GM18951 (cell line): ENCODE measurements at regions of chr1 and their contacts with region 1.

Region 1: DNA sequence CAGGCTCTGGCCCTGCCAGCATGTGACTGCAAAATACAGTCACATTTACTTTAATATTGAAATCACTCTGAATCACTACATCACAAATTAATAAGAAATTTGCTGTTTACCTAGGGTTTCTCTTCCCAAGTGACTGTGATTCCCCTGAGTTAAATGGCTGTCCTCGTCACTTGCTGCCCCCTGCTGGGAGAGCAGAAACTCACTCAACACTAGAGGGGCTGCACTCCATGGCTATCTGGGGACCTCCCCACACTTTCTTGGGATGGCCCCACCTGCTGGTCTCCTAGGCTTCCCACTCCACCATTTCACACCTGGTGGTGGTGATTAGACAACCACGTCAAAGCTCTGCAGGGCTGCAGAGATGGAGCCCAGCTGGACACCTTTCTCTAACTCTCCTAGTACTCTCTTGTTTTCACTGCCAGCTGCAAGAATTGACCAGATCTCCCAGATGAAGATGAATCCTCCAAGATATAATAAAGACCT is 63.4 kb downstream of the CD2 start:
- POLR2A ChIP-seq: no peak

Region 2: DNA sequence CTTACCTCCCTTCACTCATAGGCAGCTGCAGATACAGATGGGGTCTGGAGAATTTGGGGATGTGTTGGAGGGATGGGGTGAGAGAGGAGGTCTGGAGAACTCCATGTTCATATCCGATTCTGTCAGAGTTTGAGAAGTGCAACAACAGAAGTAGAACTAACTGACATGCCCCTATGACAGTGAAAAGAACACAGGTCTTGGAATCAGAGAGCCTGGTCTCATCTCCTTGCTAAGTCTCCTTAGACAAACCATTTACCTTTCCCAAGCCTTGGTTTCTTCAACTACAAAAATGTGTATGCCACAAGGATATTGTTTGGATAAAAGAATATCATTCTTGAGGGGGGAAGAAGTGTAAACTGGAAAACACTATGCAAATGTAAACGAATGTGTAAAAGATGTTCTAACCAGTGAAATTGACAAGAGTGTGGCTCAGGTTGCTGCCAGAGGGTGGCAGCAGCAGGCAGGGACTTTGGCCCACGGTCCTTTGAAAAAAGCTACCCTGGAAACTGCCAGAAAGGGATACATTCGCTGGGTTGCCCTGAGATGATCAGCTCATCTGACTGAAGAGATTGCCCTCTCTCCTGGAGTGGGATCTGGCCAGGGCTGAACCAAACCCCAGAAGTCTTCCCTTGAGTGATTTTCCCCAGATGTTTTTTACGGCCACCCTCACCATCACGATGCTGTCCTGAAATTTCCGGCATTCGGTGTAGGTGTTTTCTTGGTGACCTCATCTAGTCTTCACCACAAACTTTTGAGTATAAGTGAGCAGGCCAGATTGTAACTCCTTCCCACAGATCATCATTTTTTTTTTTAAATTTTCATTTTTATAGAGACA is 80.4 kb before region 1 on chr1:
- in situ Hi-C with region 1: loop called (anchors 5 kb)
- POLR2A ChIP-seq: peak; percentile 33

Region 3: GRCh38 chr1:116886291-116886878 is 68.8 kb after region 1 on chr1:
- in situ Hi-C with region 1: no loop called
- POLR2A ChIP-seq: no peak